Activated CD4-positive, alpha-beta T cell treated with anti-CD3 and anti-CD28 coated beads, Interleukin-2, amount 10 ng/mL, durations not matched to agents 24 days and 14 days (primary cell): ENCODE measurements at regions of chr2 and their contacts with region 1.

Region 1: GRCh38 chr2:148989882-148990493 is 48.5 kb upstream of the LYPD6B start:
- DNase-seq: peak; percentile 87
- H3K4me3 Mint-ChIP-seq: no peak overlapping the region
- H3K27ac Mint-ChIP-seq: no peak overlapping the region
- H3K4me1 Mint-ChIP-seq: peaks cover 2% of the 10 kb centered on the region
- H3K27me3 Mint-ChIP-seq: no peaks in the 10 kb centered on the region

Region 2: GRCh38 chr2:147937744-147938349 is 1052.1 kb before region 1 on chr2:
- intact Hi-C with region 1: loop called (anchors 1 kb)
- DNase-seq: no peak
- H3K4me3 Mint-ChIP-seq: no peak overlapping the region
- H3K27ac Mint-ChIP-seq: no peak overlapping the region
- H3K4me1 Mint-ChIP-seq: peaks cover 2% of the 10 kb centered on the region
- H3K27me3 Mint-ChIP-seq: no peaks in the 10 kb centered on the region

Region 3: DNA sequence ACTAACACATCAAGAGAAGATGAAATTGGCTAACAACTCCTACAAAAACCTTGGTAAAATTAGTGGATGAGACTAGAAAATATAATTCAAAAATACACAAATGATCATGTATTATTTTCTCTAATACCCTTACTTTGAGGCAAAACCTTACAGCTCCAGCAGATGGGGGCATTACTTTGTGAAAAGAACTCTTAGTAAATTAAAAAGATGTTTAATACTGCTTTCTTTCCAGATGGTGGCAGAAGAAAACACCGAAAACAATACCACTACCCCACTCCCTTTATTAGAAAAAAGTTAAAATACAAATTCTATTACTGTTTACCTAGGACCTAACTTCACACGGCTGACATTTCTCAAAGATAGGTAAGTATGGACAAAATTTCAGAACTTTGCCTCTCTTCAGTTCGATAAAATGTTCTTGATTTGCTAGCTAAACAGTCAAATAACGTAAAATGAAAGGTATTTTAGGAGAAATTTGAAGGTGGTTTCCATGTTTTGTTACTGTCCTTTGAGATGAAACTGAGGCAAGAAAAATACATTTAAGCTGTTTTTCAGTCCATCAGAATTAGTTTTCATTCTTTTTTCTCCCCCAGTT is 1000.1 kb before region 1 on chr2:
- intact Hi-C with region 1: loop called (anchors 5 kb)
- DNase-seq: peak; percentile 72
- H3K4me3 Mint-ChIP-seq: no peak overlapping the region
- H3K27ac Mint-ChIP-seq: no peak overlapping the region
- H3K4me1 Mint-ChIP-seq: peaks cover 7% of the 10 kb centered on the region
- H3K27me3 Mint-ChIP-seq: no peaks in the 10 kb centered on the region

Region 4: GRCh38 chr2:148201075-148202004 is 788.6 kb before region 1 on chr2:
- intact Hi-C with region 1: loop called (anchors 10 kb)
- DNase-seq: peak; percentile 82
- H3K4me3 Mint-ChIP-seq: no peak overlapping the region
- H3K27ac Mint-ChIP-seq: no peak overlapping the region
- H3K4me1 Mint-ChIP-seq: no peaks in the 10 kb centered on the region
- H3K27me3 Mint-ChIP-seq: no peaks in the 10 kb centered on the region

Region 5: DNA sequence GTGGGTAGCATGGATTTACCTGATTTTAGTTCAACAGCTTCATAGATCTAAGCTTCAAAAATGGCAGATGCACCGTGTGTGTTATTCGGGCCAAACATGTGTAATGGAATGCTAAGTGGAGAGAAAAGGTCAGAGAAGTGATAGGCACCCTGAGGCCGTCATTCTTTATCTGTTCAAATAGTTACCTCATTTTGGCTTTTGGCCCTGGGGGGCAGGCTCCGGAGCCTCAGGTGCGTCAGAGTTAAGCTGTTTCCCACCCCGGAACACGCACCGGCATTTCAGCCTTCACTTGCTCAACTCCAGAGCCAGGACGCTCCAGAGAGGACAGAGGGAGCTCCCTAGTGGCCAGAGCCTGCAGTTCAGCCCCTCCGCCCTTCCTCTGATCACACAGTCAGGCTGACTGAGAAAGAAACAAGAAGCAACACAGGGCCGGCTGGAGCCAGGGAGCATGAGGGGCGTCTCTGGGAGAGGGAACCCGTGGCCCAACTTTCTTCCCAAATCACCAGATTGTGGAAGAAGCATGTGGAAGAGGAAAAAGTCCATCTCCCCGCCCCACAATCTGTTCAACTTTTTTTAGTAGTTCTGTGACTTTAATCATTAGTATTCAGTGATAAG is 480.6 kb before region 1 on chr2:
- intact Hi-C with region 1: loop called (anchors 10 kb)
- DNase-seq: peak; percentile 95
- H3K4me3 Mint-ChIP-seq: peak overlapping the region; percentile 73
- H3K27ac Mint-ChIP-seq: peak overlapping the region; percentile 66
- H3K4me1 Mint-ChIP-seq: peaks cover 31% of the 10 kb centered on the region
- H3K27me3 Mint-ChIP-seq: no peaks in the 10 kb centered on the region

Region 6: DNA sequence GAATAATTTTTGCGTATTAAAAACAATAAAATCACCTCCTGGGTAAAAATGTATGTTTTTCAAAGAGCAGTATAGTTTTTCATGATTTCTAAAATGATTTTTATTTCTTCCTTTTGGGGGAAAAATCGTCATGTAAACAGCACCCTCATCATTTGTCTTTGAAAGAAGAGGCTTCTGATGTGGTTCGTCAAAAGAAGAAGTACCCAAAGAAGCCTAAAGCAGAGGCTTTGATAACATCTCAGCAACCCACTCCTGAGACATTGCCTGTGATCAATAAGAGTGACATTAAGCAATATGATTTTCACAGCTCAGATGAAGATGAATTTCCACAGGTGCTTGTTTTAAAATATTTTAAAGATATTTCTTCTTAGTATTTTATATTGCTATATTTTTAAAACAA is 225.2 kb before region 1 on chr2:
- intact Hi-C with region 1: loop called (anchors 10 kb)
- DNase-seq: no peak
- H3K4me3 Mint-ChIP-seq: no peak overlapping the region
- H3K27ac Mint-ChIP-seq: no peak overlapping the region
- H3K4me1 Mint-ChIP-seq: peaks cover 5% of the 10 kb centered on the region
- H3K27me3 Mint-ChIP-seq: no peaks in the 10 kb centered on the region

Region 7: GRCh38 chr2:148926291-148926961 is 63.6 kb before region 1 on chr2:
- intact Hi-C with region 1: loop called (anchors 5 kb)
- DNase-seq: peak; percentile 88
- H3K4me3 Mint-ChIP-seq: peak overlapping the region; percentile 88
- H3K27ac Mint-ChIP-seq: peak overlapping the region; percentile 88
- H3K4me1 Mint-ChIP-seq: peaks cover 21% of the 10 kb centered on the region
- H3K27me3 Mint-ChIP-seq: no peaks in the 10 kb centered on the region